Esophagus squamous epithelium (tissue), 5 donors: ENCODE measurements at regions of chr2 and their contacts with region 1.

Region 1: DNA sequence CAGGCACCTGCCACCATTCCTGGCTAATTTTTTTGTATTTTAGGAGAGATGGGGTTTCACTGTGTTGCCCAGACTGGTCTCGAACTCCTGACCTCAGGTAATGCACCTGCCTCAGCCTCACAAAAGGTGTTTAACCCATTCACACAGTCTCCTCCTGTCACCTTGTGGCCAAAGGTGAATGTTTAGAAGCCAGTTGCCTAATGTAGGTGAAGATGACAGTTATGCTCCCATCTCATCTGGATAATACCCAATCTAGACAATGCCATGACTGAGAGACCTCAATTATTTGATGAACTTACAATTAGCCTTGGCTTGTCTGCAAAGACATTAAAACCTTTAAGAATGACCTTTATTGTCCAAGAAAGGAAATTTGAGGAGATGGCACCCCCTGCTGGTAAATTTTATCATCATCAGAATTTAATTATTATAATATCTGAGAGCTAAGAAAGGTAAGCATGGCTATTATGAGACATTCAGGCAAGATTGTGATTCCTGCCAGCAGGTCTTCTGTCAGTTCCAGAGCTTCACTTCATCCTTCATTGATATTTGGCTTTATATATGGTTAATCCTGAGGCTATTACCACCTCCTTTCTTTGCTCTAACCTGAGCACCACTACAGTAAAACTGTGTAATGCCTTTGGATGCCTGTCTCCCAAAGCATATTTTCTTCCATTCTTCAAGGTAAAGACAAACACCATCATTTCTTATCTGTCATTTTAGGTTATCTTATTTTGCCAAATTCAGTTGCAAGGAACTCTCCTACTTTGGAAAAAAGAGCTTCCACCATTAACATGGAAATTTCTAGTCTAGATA is 117.6 kb downstream of the FAM124B start:
- DNase-seq: no peak
- H3K4me3 ChIP-seq: no peak overlapping the region
- H3K27ac ChIP-seq: no peak overlapping the region
- H3K4me1 ChIP-seq: peaks cover 0 to 6% (median 0%) of the 10 kb centered on the region in 3 donors
- H3K27me3 ChIP-seq: no peaks in the 10 kb centered on the region
- CTCF ChIP-seq: peak; percentile 55 to 90 (median 80)
- POLR2A ChIP-seq: no peak

Region 2: GRCh38 chr2:223765221-223765785 is 519.0 kb before region 1 on chr2:
- intact Hi-C with region 1: no loop called
- DNase-seq: no peak
- H3K4me3 ChIP-seq: no peak overlapping the region
- H3K27ac ChIP-seq: no peak overlapping the region
- H3K4me1 ChIP-seq: peaks cover 0 to 17% (median 16%) of the 10 kb centered on the region in 3 donors
- H3K27me3 ChIP-seq: no peaks in the 10 kb centered on the region
- CTCF ChIP-seq: no peak
- POLR2A ChIP-seq: no peak

Region 3: GRCh38 chr2:223970343-223971128 is 313.8 kb before region 1 on chr2:
- intact Hi-C with region 1: loop called (anchors 5 kb)
- DNase-seq: no peak
- H3K4me3 ChIP-seq: no peak overlapping the region
- H3K27ac ChIP-seq: no peak overlapping the region
- H3K4me1 ChIP-seq: peaks cover 0 to 8% (median 0%) of the 10 kb centered on the region in 3 donors
- H3K27me3 ChIP-seq: no peaks in the 10 kb centered on the region
- CTCF ChIP-seq: peak; percentile 70 to 93 (median 89)
- POLR2A ChIP-seq: no peak

Region 4: GRCh38 chr2:223995569-223995968 is 288.8 kb before region 1 on chr2:
- intact Hi-C with region 1: loop called (anchors 5 kb)
- DNase-seq: no peak
- H3K4me3 ChIP-seq: no peak overlapping the region
- H3K27ac ChIP-seq: no peak overlapping the region
- H3K4me1 ChIP-seq: peaks cover 0 to 21% (median 0%) of the 10 kb centered on the region in 3 donors
- H3K27me3 ChIP-seq: no peaks in the 10 kb centered on the region
- CTCF ChIP-seq: no peak
- POLR2A ChIP-seq: no peak